Ascending aorta (tissue), 2 donors: ENCODE measurements at regions of chr6 and their contacts with region 1.

Region 1: GRCh38 chr6:30742316-30743098 is at the start of gene FLOT1:
- DNase-seq: peak; percentile 95 to 99
- H3K4me3 ChIP-seq: peak within 1 kb of the TSS; percentile 89 to 91
- H3K27ac ChIP-seq: peak within 1 kb of the TSS; percentile 94 to 97
- H3K4me1 ChIP-seq: peaks cover 8 to 22% of the 10 kb centered on the region in 2 donors
- H3K27me3 ChIP-seq: no peaks in the 10 kb centered on the region
- CTCF ChIP-seq: no peak
- total RNA-seq, gene FLOT1: 123 TPM

Region 2: GRCh38 chr6:30541515-30542403 is 200.7 kb before region 1 on chr6:
- intact Hi-C with region 1: no loop called
- DNase-seq: peak in 1 of 2 donors; percentile 87
- H3K4me3 ChIP-seq: peak overlapping the region; percentile 9 to 52
- H3K27ac ChIP-seq: no peak overlapping the region
- H3K4me1 ChIP-seq: no peaks in the 10 kb centered on the region
- H3K27me3 ChIP-seq: no peaks in the 10 kb centered on the region
- CTCF ChIP-seq: peak; percentile 69 to 97 (median 92)

Region 3: DNA sequence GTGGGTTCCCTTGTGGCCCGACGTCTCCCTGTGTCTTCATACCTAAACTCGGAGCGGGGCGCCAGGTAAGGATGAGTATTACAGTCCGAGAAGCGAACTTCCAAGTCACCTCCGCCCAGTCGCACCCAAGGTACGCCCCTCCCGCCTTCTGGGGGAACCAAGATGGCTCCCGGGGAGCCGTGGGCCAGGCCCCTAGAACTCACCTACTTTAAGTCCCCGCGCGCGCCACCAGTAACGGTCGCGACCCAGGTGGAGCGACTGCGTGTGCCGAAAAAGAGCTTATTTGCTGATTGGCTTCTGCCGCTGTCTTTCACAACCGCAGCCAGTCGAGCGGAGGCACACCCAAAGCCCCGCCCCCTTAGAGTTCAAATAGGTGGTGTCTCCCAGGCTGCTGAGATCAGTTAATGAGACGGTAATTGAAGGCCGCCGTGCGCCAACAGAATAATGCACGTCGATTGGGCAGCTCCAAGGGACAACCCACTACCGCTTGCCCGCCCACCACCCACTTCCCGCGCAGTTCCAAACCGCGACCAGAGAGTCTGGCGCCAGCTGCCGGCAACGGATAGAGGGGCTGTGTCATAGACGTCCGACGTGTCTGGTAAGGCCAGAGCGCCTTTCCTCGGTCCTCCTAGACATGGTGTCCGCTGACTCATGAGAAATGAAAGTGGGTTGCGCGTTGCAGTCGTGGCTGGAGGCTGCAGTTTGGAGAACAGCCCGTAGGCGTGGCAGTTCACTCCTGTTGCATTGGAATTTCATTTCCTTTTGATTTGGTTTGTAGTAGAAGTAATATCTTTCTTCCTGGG is 25.3 kb before region 1 on chr6 and contains the start of gene MDC1:
- intact Hi-C with region 1: loop called (anchors 1 kb)
- DNase-seq: peak; percentile 100
- H3K4me3 ChIP-seq: peak within 1 kb of the TSS; percentile 69 to 77
- H3K27ac ChIP-seq: peak within 1 kb of the TSS; percentile 93 to 94
- H3K4me1 ChIP-seq: peaks cover 0 to 24% of the 10 kb centered on the region in 2 donors
- H3K27me3 ChIP-seq: no peaks in the 10 kb centered on the region
- CTCF ChIP-seq: peak in 1 of 3 experiments; percentile 65
- total RNA-seq, gene MDC1: 27.1 TPM

Region 4: GRCh38 chr6:30781743-30782424 is 39.4 kb after region 1 on chr6:
- intact Hi-C with region 1: loop called (anchors 1 kb)
- DNase-seq: peak; percentile 83 to 98
- H3K4me3 ChIP-seq: peak overlapping the region in 1 of 2 donors; percentile 2
- H3K27ac ChIP-seq: peak overlapping the region; percentile 90 to 94
- H3K4me1 ChIP-seq: peaks cover 13 to 45% of the 10 kb centered on the region in 2 donors
- H3K27me3 ChIP-seq: no peaks in the 10 kb centered on the region
- CTCF ChIP-seq: no peak

Region 5: DNA sequence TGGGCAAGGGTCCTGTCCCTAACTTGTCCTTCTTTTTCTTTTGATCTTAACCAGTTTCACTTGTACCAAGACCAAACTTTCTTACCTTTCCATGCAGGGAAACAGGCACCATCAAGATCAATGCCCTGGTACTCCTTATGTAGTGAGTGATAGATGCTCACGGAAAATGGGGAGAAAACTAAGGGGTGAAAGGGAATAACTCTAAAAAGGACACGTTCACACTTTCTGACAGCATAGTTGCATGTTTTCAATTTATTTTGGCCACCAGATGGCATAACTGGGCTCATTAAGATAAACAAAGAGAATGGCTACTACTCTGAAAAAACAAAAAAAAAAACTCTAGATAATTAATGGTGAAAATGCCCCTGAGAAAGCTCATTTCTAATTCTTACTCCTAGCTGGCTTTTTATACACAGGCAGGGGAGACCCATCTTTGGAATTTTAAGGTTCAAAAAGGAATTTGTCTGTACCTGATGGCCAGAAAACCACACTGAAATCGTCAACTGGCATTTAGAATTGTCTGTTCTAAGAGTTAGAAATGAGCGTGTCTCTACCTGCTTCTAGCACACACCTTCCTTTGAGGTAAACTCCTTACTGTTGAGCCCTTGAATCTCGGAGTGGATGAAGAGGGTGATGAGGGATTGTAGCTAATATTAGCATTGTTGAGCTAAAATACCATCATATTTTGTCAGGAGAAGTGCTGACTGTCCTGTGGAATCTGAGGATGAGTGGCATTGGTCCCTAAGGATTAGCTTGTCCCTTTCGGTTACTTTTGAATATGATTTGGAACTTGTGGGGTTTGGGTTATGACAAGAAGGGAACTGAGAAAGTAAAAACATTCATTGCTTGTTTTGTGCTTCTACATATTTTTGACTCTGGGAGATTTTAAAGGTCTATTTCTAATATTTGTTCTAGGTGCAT is 79.6 kb after region 1 on chr6:
- intact Hi-C with region 1: loop called (anchors 2 kb)
- DNase-seq: no peak
- H3K4me3 ChIP-seq: no peak overlapping the region
- H3K27ac ChIP-seq: peak overlapping the region; percentile 35 to 47
- H3K4me1 ChIP-seq: peaks cover 6 to 14% of the 10 kb centered on the region in 2 donors
- H3K27me3 ChIP-seq: no peaks in the 10 kb centered on the region
- CTCF ChIP-seq: peak; percentile 31 to 45 (median 45)

Region 6: GRCh38 chr6:30877419-30878371 is 135.2 kb after region 1 on chr6:
- intact Hi-C with region 1: loop called (anchors 2 kb)
- DNase-seq: peak; percentile 67 to 97
- H3K4me3 ChIP-seq: peak overlapping the region; percentile 45 to 57
- H3K27ac ChIP-seq: peak overlapping the region; percentile 81 to 87
- H3K4me1 ChIP-seq: peaks cover 0 to 11% of the 10 kb centered on the region in 2 donors
- H3K27me3 ChIP-seq: no peaks in the 10 kb centered on the region
- CTCF ChIP-seq: peak; percentile 86 to 90 (median 89)

Region 7: DNA sequence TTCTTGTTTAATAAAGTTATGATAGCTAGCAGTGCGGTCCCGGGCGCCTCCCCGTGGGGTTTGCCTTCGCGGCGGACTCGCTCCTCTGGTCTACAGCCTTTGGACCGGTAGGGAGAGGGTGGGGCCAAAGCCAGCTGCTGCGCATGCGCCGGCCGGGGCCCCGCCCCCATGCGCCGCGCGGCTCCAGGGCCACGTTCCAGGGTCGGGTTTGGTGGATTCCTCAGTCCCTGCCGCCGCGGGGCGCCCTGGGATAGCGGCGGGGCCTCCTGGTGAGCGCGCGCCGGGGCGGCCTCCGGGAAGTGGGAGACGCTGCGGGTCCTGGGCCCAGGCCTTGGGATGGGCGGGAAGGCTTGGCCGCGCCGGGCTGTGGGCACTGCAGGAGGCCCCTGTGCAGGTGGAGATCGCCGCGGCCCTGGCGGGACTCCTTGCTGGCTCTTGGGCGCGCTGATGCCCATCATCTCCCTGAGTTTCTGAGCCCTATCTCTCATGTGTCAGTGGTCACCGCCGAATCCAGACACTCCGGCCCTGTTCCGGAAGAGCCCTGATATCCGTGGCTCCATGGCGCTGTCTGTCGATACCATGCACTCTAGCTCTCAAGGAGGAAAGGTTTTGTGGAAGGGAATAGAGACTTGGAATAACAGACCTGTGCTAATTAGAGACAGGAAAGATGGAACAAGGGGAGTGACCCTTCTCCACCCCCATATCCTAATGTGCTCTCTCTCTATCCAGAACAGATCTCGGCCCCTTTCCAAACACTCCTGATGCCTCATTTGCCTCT is 171.8 kb after region 1 on chr6 and contains the start of gene VARS2:
- intact Hi-C with region 1: loop called (anchors 2 kb)
- DNase-seq: peak; percentile 72 to 95
- H3K4me3 ChIP-seq: peak within 1 kb of the TSS; percentile 60 to 65
- H3K27ac ChIP-seq: peak within 1 kb of the TSS; percentile 78 to 86
- H3K4me1 ChIP-seq: peaks cover 4 to 16% of the 10 kb centered on the region in 2 donors
- H3K27me3 ChIP-seq: no peaks in the 10 kb centered on the region
- CTCF ChIP-seq: peak in 2 of 3 experiments; percentile 17 to 45
- total RNA-seq, gene VARS2: 5.7 TPM

Region 8: DNA sequence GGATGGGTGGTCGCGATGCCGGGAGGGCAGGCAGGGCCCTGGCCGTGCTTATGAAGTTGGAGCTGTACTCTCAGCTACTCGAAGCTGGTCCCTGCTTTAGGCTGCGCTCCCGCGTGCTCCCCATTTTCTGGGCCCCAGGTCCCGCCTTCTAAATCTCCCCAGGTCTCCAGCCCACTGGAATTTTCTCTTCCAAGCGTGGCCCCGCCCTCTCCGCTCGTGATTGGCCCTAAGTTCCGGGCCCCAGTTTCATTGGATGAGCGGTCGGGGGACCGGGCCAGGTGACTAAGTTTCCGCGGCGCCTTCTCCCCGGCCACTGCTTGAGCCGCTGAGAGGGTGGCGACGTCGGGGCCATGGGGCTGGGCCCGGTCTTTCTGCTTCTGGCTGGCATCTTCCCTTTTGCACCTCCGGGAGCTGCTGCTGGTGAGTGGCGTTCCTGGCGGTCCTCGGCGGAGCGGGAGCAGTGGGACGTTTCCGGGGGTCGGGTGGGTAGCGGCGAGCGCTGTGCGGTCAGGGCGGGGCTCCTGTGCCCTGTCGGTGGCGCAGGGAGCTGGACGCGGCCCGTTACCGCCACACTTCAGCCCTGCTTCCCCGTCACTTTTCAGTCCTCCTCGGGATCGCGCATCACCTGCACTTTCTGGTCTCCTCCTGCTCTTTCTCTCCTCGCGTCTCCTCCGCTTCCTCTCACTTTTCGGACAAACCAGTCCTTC is 660.9 kb after region 1 on chr6 and contains the start of gene MICA:
- intact Hi-C with region 1: loop called (anchors 10 kb)
- DNase-seq: peak; percentile 74 to 96
- H3K4me3 ChIP-seq: peak within 1 kb of the TSS; percentile 68 to 76
- H3K27ac ChIP-seq: peak within 1 kb of the TSS; percentile 92 to 95
- H3K4me1 ChIP-seq: peaks cover 12 to 26% of the 10 kb centered on the region in 2 donors
- H3K27me3 ChIP-seq: no peaks in the 10 kb centered on the region
- CTCF ChIP-seq: peak in 2 of 3 experiments; percentile 24 to 39
- total RNA-seq, gene MICA: 19.2 TPM